Body of pancreas (tissue), 4 donors: ENCODE measurements at regions of chr6 and their contacts with region 1.

Region 1: DNA sequence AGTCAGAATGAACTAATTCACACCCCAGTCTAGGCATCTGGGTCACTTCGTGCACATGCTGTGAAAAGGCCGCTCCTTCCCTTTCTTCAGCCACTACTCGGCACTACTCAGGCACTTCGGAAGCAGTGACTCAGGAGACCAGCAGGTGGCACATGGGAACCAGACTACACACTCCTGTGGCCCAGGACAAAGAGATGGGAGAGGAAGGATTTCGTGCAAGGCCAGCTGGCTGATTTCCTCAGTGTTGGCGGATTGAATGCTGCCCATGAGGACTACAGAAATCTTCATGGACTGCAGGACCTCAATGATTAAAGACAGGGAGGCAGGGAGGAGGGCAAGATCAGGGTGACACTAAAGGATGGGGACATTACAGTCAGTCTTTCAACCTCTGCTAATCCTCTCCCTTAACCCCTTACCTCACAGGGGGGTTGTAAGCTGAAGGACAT is 117.8 kb upstream of the SPACA1 start:
- DNase-seq: peak; percentile 79 to 86 (median 82)
- ATAC-seq: peak; percentile 95
- H3K4me3 ChIP-seq: no peak overlapping the region
- H3K27ac ChIP-seq: no peak overlapping the region
- H3K4me1 ChIP-seq: no peaks in the 10 kb centered on the region
- H3K27me3 ChIP-seq: no peaks in the 10 kb centered on the region
- CTCF ChIP-seq: peak; percentile 56 to 89 (median 87)
- POLR2A ChIP-seq: no peak

Region 2: DNA sequence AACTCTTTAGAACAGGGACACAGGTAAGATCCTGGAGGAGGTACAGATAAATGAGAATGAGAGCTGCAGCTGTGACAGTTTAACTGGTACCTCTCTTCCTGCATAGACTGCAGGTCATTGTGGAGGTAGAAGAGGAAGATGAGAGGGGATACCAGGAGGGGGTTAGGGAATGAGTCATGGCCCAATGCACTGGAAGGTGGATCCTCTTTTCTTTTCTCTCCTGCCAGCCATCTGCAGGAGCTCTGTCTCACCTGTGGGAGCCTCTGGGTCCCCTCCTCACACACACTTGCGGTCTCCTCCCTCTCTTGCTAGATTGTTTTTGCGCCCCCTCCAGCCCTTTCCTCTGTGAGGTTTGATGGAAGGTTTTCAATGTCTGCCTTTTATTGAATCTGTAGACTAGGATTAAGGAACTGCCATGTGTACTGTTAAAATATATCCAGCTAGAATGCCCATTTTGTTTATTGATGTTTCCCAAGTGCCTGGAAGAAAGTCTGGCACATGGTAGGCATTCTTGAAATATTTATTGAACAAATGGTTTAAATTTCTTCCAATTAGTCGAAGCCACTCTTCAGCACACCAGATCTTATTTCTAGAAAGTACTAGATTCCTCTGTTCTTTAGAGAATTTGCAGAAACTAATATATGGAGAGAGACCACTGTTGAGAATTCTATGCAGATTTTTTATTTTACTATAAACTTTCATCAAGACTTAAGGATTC is 572.2 kb before region 1 on chr6:
- intact Hi-C with region 1: no loop called
- DNase-seq: no peak
- ATAC-seq: no peak
- H3K4me3 ChIP-seq: no peak overlapping the region
- H3K27ac ChIP-seq: no peak overlapping the region
- H3K4me1 ChIP-seq: no peaks in the 10 kb centered on the region
- H3K27me3 ChIP-seq: no peaks in the 10 kb centered on the region
- CTCF ChIP-seq: no peak
- POLR2A ChIP-seq: no peak

Region 3: DNA sequence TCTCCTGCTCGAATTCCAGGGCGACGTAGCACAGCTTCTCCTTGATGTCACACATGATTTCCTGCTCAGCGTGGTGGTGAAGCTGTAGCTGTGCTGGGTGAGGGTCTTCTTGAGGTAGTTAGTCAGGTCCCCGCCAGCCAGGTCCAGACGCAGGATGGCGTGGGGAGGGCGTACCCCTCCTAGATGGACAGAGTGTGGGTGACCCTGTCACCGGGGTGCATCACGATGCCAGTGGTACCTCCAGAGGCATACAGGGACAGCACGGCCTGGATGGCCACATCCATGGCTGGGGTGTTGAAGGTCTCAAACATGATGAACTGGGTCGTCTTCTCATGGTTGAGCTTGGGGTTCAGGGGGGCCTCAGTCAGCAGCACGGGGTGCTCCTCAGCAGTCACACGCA is 346.5 kb after region 1 on chr6:
- intact Hi-C with region 1: no loop called
- DNase-seq: no peak
- ATAC-seq: no peak
- H3K4me3 ChIP-seq: no peak overlapping the region
- H3K27ac ChIP-seq: no peak overlapping the region
- H3K4me1 ChIP-seq: no peaks in the 10 kb centered on the region
- H3K27me3 ChIP-seq: no peaks in the 10 kb centered on the region
- CTCF ChIP-seq: no peak
- POLR2A ChIP-seq: no peak

Region 4: DNA sequence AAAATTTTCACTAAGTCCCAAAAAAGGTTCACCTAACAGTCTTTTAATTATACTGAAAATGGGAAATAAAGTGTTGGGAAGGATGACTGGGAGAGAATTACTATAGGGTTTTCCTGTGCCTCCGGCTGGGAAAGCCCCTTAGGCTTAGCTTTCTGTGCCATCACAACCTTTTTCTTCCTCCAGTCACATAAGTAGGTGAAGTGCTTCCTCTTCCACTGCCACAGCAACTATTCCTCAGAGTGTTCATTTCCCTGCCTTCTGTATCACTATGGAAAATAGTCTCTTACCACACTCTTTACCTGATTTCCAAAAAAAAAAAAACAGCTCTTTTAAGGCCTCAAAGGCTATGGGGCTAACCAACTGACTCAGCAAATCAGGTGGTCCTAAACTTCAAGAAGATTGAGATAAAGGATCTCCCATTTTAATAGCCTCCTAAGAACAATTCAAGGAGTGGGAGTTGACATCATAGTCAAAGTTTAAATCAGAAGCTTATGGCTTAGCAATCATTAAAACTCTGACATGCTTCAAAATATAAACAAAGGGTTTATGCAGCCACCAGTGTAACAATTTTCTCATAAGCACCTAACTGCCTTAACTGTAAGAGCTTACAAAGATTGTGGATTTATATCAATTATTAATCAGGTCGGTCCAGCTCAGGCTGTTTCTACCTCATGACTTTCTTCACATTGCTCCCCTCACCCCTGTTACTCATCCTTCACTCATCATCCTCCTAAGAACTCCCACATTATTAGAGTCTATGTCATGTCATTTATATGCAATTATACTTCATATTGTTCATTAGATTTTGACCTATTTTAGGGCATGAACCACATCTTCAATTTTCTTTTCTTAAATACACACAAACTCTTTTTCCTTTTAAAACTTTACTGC is 938.2 kb after region 1 on chr6:
- intact Hi-C with region 1: loop called (anchors 10 kb)
- DNase-seq: no peak
- ATAC-seq: no peak
- H3K4me3 ChIP-seq: no peak overlapping the region
- H3K27ac ChIP-seq: no peak overlapping the region
- H3K4me1 ChIP-seq: no peaks in the 10 kb centered on the region
- H3K27me3 ChIP-seq: no peaks in the 10 kb centered on the region
- CTCF ChIP-seq: no peak
- POLR2A ChIP-seq: no peak